AG04449 (cell line): ENCODE measurements at regions of chr17 and their contacts with region 1.

Region 1: DNA sequence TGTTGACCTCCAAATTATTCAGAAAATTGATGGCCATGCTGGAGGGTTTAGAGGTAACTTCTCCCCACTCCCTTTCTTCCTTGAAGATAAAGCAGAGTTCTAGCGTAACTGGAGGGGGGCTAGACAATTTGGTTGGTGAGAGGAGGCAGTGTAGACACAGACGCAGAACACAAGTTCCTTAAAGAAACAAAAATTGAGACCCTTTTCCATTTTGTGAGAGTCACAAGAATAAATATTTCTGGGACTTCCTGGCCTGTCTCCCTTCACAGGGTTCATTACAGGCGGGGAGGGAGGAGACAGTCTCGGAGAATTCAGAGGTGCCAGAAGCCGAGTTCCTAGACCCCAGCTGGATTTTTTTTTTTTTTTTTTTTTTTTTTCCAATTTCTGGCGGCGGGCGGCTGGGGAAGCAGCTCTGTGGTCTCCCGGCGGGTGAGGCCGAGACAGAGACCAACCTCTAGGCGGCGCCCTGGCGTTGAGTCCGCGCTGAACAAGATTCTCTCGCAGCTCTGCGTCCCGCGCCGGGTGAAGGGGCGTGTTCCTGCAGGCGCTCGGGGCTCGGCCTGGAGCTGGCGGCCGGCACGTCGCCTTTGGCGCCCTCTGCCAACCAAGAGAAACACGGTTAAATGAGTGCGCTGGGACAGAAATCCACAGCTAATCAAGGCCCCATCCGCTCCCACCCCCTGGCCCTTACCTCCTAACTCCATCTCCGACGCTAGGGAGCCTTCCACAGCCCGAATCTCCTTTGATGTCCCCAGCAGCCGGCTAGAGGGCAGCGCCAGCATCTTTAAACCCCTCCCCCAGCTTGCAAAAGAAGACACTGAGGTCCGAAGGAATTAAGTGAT is 10.2 kb upstream of the HOXB9 start:
- DNase-seq: no peak
- H3K4me3 ChIP-seq: no peak overlapping the region
- CTCF ChIP-seq: peak; percentile 81

Region 2: DNA sequence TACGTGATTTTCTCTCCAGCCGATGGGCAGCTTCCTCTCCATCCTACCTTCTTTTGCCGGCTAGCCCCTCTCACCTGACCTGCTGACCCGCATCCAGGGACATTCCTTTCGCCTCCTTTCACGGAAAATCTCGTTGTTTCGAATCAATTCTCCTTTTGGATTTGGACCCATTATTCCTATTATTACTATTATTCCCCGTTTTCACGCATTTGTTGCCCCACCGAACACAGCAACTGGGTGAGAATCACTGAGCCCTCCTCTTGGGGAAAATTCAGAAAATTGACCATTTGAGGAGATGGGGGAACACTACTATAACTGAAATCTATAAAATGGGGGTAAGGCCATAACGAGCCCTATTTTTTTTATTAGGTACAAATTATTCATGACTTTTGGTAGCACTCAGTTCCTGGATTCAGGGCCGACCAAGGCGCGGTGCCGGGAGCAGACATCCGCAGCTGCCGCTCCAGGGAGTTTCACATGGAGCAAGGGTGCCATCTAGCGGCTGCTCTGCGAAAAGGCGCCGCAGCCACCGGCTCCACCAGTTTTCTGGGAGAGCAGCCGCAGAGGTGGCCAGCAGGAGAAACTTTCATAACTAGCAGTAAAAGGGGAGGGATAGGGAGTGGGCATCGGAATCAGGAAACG is 18.0 kb before region 1 on chr17:
- CTCF ChIA-PET with region 1: interaction called, 16 read pairs
- POLR2A ChIA-PET with region 1: no interaction called
- DNase-seq: no peak
- H3K4me3 ChIP-seq: peak overlapping the region; percentile 29
- CTCF ChIP-seq: peak; percentile 88

Region 3: GRCh38 chr17:48625495-48626244 is 10.7 kb before region 1 on chr17:
- CTCF ChIA-PET with region 1: interaction called, 22 read pairs
- POLR2A ChIA-PET with region 1: no interaction called
- DNase-seq: no peak
- H3K4me3 ChIP-seq: peak overlapping the region; percentile 51
- CTCF ChIP-seq: no peak

Region 4: GRCh38 chr17:48647103-48647962 is 10.9 kb after region 1 on chr17:
- CTCF ChIA-PET with region 1: interaction called, 12 read pairs
- POLR2A ChIA-PET with region 1: no interaction called
- DNase-seq: no peak
- H3K4me3 ChIP-seq: peak overlapping the region; percentile 53
- CTCF ChIP-seq: no peak

Region 5: GRCh38 chr17:48729335-48730239 is 93.2 kb after region 1 on chr17:
- CTCF ChIA-PET with region 1: no interaction called
- POLR2A ChIA-PET with region 1: no interaction called
- DNase-seq: no peak
- H3K4me3 ChIP-seq: no peak overlapping the region
- CTCF ChIP-seq: no peak

Region 6: DNA sequence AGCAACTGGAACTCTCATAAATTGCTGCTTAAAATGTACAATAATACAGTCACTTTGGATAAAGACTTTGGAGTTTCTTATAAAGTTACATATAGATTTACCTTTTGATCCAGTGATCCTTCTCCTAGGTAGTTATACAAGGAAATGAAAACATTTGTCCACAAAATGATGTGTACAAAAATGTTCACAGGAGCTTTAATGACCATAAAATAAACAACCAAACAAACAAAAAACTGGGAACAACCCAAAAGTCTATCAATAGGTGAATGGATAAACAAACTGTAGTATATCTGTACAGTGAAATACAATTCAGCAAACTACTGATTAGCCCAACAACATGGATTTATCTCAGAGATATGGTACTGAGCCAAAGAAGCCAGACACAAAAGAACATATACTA is 143.0 kb after region 1 on chr17:
- CTCF ChIA-PET with region 1: no interaction called
- POLR2A ChIA-PET with region 1: no interaction called
- DNase-seq: no peak
- H3K4me3 ChIP-seq: no peak overlapping the region
- CTCF ChIP-seq: no peak